ENCODE measurements at regions of chr2 and their contacts with region 1.

Region 1: DNA sequence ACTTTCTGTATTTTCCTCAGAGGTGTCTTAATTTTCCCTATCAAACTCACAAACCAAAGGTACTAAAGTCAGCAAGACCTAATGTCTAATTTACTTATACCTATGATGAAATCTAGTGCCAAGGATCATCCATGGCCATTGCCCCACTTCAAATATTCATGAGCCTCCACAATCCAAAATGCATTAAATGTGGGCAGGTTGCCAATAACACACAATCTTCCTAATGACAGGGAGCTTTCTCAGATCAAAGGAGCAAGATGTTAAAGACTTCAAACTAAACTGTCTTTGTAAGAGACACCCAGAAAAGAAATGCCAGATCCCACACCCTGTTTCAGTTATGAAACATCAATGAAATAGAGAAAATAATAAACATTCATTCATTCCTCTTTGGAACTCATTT is 143.2 kb downstream of the TMEFF2 start:
- DNase-seq: peak; percentile 68
- H3K4me3 ChIP-seq: no peak overlapping the region
- H3K27ac ChIP-seq: no peak overlapping the region
- H3K4me1 ChIP-seq: peaks cover 8% of the 10 kb centered on the region
- H3K27me3 ChIP-seq: no peaks in the 10 kb centered on the region
- CTCF ChIP-seq: no peak

Region 2: GRCh38 chr2:191857259-191857805 is 194.2 kb before region 1 on chr2:
- CTCF ChIA-PET with region 1: no interaction called
- POLR2A ChIA-PET with region 1: interaction called, 11 read pairs
- intact Hi-C with region 1: no loop called
- DNase-seq: no peak
- H3K4me3 ChIP-seq: no peak overlapping the region
- H3K27ac ChIP-seq: no peak overlapping the region
- H3K4me1 ChIP-seq: peaks cover 15% of the 10 kb centered on the region
- H3K27me3 ChIP-seq: no peaks in the 10 kb centered on the region
- CTCF ChIP-seq: no peak